PC-9 (cell line): ENCODE measurements at regions of chr10 and their contacts with region 1.

Region 1: GRCh38 chr10:28381903-28382347 is 79.1 kb upstream of the MPP7 start:
- DNase-seq: peak; percentile 54 to 62
- H3K4me3 ChIP-seq: no peak overlapping the region
- H3K27ac ChIP-seq: no peak overlapping the region
- H3K4me1 ChIP-seq: no peaks in the 10 kb centered on the region
- H3K27me3 ChIP-seq: peaks cover 10% of the 10 kb centered on the region; the same call in 1 of the 2 replicates
- CTCF ChIP-seq: peak; percentile 81

Region 2: GRCh38 chr10:27369880-27370279 is 1012.0 kb before region 1 on chr10:
- CTCF ChIA-PET with region 1: no interaction called
- POLR2A ChIA-PET with region 1: no interaction called
- intact Hi-C with region 1: loop called (anchors 5 kb)
- DNase-seq: no peak
- H3K4me3 ChIP-seq: no peak overlapping the region
- H3K27ac ChIP-seq: no peak overlapping the region
- H3K4me1 ChIP-seq: no peaks in the 10 kb centered on the region
- H3K27me3 ChIP-seq: peaks cover 17% of the 10 kb centered on the region; the same call in 1 of the 2 replicates
- CTCF ChIP-seq: peak; percentile 55

Region 3: DNA sequence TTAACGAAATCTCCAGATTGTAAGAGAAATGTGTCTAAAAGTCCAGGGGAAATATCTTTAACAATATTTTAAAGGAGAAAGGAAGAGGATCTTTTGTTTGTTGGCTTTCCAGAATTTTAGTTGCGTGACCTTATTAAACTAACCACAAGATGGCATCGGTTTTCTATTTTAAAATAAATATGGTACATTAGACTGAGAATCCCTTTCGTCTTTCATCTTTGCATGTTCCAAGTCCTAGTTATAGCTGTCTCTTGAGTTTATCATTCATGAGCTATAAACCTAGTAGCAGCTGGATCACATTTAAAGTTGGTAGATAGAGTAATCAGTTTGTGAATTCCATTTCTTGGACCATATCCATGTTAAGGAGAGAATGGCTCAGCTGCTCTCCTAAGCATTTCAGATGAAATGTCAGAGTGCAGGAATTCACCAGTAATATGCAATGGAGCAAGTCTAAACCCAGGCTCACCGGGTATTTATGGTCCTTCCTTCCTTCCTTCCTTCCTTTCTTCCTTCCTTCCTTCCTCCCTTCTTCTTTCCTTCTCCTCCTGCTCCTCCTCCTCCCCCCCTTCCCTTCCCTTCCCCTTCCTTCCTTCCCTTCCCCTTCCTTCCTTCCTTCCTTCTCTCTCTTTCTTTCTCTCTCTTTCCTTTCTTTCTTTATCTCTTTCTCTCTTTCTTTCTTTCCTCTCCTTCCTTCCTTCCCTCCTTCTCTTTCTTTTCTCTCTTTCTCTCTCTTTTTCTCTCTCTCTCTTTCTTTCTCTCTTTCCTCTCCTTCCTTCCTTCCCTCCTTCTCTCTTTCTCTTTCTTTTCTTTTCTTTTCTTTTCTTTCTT is 935.6 kb before region 1 on chr10:
- CTCF ChIA-PET with region 1: no interaction called
- POLR2A ChIA-PET with region 1: no interaction called
- intact Hi-C with region 1: loop called (anchors 5 kb)
- DNase-seq: no peak
- H3K4me3 ChIP-seq: no peak overlapping the region
- H3K27ac ChIP-seq: no peak overlapping the region
- H3K4me1 ChIP-seq: no peaks in the 10 kb centered on the region
- H3K27me3 ChIP-seq: no peaks in the 10 kb centered on the region
- CTCF ChIP-seq: peak; percentile 52

Region 4: GRCh38 chr10:27558612-27559020 is 823.3 kb before region 1 on chr10:
- CTCF ChIA-PET with region 1: no interaction called
- POLR2A ChIA-PET with region 1: no interaction called
- intact Hi-C with region 1: loop called (anchors 2 kb)
- DNase-seq: peak; percentile 19 to 35
- H3K4me3 ChIP-seq: no peak overlapping the region
- H3K27ac ChIP-seq: no peak overlapping the region
- H3K4me1 ChIP-seq: no peaks in the 10 kb centered on the region
- H3K27me3 ChIP-seq: no peaks in the 10 kb centered on the region
- CTCF ChIP-seq: peak; percentile 72

Region 5: GRCh38 chr10:28250782-28251181 is 131.1 kb before region 1 on chr10:
- CTCF ChIA-PET with region 1: interaction called, 8 read pairs
- POLR2A ChIA-PET with region 1: no interaction called
- intact Hi-C with region 1: loop called (anchors 5 kb)
- DNase-seq: no peak
- H3K4me3 ChIP-seq: no peak overlapping the region
- H3K27ac ChIP-seq: no peak overlapping the region
- H3K4me1 ChIP-seq: no peaks in the 10 kb centered on the region
- H3K27me3 ChIP-seq: peaks cover 35% of the 10 kb centered on the region
- CTCF ChIP-seq: peak; percentile 39; the same call in 1 of the 2 replicates